Esophagus muscularis mucosa (tissue), 4 donors: ENCODE measurements at regions of chr7 and their contacts with region 1.

Region 1: GRCh38 chr7:129231666-129232065 is 6.8 kb downstream of the AHCYL2 start:
- DNase-seq: no peak
- H3K4me3 ChIP-seq: no peak overlapping the region
- H3K27ac ChIP-seq: no peak overlapping the region
- H3K4me1 ChIP-seq: peaks cover 0 to 25% (median 10%) of the 10 kb centered on the region in 4 donors
- H3K27me3 ChIP-seq: no peaks in the 10 kb centered on the region
- CTCF ChIP-seq: no peak
- EP300 ChIP-seq: no peak
- POLR2A ChIP-seq: no peak

Region 2: DNA sequence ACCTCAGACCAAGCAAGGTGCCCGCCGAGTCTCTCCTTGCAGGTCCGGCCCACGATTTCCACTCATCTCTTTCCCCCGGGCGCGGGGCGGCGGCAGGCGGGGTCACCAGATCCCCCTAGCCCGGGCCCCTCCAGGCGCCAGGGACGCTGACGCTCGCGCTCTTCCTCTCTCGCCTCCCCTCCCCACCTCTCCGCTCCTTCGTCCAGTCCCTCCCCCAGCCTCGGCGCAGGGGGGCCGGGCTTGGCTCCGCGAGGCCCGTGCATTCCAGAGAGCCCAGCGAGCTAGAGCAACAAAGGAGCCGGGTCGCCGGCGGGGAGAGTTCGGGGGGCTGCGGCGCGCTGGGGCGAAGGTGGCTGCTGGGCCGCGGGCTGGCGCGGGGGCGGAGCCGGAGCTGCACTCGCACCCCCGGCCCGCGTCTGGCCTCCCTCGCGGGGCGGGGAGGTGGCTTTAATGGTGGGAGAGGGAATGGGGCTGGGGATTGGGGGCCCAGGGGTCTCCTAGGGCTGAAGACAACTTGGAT is 43.2 kb before region 1 on chr7 and contains the start of gene SMO:
- intact Hi-C with region 1: no loop called
- DNase-seq: no peak
- H3K4me3 ChIP-seq: peak within 1 kb of the TSS; percentile 62 to 85 (median 74)
- H3K27ac ChIP-seq: peak within 1 kb of the TSS; percentile 50 to 72 (median 62)
- H3K4me1 ChIP-seq: peaks cover 10 to 29% (median 21%) of the 10 kb centered on the region in 4 donors
- H3K27me3 ChIP-seq: no peaks in the 10 kb centered on the region
- CTCF ChIP-seq: no peak
- EP300 ChIP-seq: no peak
- POLR2A ChIP-seq: no peak
- total RNA-seq, gene SMO: 8.7 to 23.9 (median 14.5) TPM

Region 3: DNA sequence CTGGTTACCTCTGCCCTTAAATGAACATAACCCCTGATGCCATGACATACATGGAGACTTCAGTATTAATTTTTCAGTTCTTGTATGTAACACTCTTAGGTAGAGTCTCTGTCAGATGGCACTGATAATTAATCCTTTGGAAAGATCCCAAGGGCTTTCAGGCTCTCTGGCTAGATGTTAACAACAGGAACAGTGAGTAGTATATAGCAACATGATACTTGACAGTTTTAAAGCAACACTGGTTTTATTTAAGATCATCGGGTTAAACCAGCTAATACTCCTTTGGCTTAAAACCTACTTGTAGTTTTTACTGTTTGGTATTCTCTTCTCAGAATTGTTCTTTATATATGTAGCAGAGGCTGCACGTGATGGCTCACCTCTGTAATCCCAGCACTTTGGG is 20.5 kb after region 1 on chr7:
- intact Hi-C with region 1: loop called (anchors 1 kb)
- DNase-seq: no peak
- H3K4me3 ChIP-seq: no peak overlapping the region
- H3K27ac ChIP-seq: no peak overlapping the region
- H3K4me1 ChIP-seq: peaks cover 0 to 12% (median 1%) of the 10 kb centered on the region in 4 donors
- H3K27me3 ChIP-seq: no peaks in the 10 kb centered on the region
- CTCF ChIP-seq: no peak
- EP300 ChIP-seq: no peak
- POLR2A ChIP-seq: no peak

Region 4: GRCh38 chr7:129343099-129343700 is 111.5 kb after region 1 on chr7:
- intact Hi-C with region 1: no loop called
- DNase-seq: no peak
- H3K4me3 ChIP-seq: no peak overlapping the region
- H3K27ac ChIP-seq: no peak overlapping the region
- H3K4me1 ChIP-seq: peaks cover 0 to 6% (median 2%) of the 10 kb centered on the region in 4 donors
- H3K27me3 ChIP-seq: no peaks in the 10 kb centered on the region
- CTCF ChIP-seq: peak; percentile 71 to 75 (median 72)
- EP300 ChIP-seq: no peak
- POLR2A ChIP-seq: no peak

Region 5: DNA sequence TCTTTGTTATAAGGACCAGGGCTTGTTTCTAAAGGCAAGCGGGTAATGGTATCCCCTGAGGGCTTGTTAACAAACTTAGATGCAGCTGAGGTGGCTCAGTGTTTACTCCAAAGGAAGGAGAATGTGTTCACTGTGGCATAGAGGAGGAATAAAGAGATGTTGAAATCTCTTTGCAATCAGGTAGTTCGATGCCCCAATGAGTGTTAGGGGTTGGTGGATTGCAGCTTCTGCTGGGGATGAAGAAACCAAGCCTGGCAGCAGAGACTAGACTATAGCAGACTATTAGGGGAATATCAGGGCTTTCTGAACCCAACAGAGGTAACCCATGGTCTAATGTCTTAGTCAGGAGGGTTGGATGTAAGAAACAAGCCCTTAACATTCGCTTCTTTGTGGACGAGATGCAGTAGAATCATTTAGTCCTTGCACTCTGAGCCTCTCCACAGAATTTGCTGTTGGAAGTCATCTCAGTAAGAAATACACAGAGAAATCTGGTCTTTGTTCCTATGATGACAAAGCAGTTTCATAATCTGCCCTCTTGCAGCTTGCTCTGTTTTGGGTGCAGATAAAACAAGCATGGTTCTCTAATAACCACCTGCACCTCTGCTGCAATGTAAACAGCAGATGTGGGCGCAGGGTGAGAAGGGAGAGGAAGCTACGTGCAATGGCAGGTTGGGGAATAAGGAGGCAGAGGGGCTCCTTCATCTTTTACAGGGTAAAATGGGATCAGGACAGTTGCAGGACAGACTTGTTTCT is 488.5 kb after region 1 on chr7:
- intact Hi-C with region 1: no loop called
- DNase-seq: no peak
- H3K4me3 ChIP-seq: no peak overlapping the region
- H3K27ac ChIP-seq: no peak overlapping the region
- H3K4me1 ChIP-seq: no peaks in the 10 kb centered on the region
- H3K27me3 ChIP-seq: no peaks in the 10 kb centered on the region
- CTCF ChIP-seq: no peak
- EP300 ChIP-seq: no peak
- POLR2A ChIP-seq: no peak